ENCODE measurements at regions of chr20 and their contacts with region 1.

Region 1: DNA sequence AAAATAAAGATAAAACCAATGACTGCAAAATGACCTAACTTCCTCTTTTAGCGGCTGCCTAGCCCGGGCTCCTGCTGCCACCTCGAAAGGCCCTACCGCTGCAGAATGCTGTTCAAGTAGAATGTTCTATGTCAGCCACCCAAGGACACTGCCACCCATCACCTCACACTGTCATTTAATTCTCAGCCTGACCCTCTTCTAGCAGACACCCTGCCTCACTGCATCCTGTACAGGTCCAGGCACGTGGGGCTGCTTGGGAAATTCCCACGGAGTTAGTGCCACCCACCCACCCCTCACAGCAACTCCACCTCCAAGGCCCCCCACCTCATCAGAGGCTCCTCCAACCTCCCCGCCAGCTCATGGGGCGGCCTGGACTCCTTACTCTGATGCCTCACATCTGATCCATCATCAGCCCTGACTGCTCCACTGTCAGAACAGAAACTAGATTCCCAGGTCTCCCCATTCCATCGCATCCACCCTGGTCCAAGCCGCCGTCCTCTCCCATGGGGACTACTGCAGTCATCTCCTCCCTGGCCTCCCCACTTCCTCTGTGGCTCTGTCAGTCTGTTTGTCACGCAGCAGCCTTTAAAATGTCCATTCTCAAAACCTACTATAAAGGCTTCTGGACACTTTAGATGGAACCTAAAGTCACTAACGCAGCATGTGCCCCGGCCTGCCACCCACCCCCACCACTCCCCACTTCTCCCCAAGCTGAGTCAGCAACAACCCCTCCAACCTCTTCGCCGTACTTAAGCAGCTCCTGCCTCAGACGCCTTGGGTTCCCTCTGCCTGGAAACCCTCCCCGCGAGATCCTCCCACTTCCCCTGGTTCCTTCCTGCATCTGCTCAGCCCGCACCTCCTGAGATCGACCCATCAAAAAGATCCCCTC is 17.0 kb downstream of the NFATC2 start:
- DNase-seq: no peak
- H3K4me3 Mint-ChIP-seq: peak overlapping the region; percentile 72
- H3K27ac Mint-ChIP-seq: peak overlapping the region; percentile 96
- H3K4me1 Mint-ChIP-seq: peaks cover 80% of the 10 kb centered on the region
- H3K27me3 Mint-ChIP-seq: no peaks in the 10 kb centered on the region

Region 2: GRCh38 chr20:51512645-51513044 is 12.8 kb before region 1 on chr20:
- intact Hi-C with region 1: loop called (anchors 1 kb)
- DNase-seq: no peak
- H3K4me3 Mint-ChIP-seq: peak overlapping the region; percentile 1
- H3K27ac Mint-ChIP-seq: peak overlapping the region; percentile 70
- H3K4me1 Mint-ChIP-seq: peaks cover 70% of the 10 kb centered on the region
- H3K27me3 Mint-ChIP-seq: no peaks in the 10 kb centered on the region

Region 3: GRCh38 chr20:51631011-51631950 is 105.8 kb after region 1 on chr20:
- intact Hi-C with region 1: no loop called
- DNase-seq: peak; percentile 7
- H3K4me3 Mint-ChIP-seq: peak overlapping the region; percentile 5
- H3K27ac Mint-ChIP-seq: peak overlapping the region; percentile 70
- H3K4me1 Mint-ChIP-seq: peaks cover 43% of the 10 kb centered on the region
- H3K27me3 Mint-ChIP-seq: peaks cover 7% of the 10 kb centered on the region

Measured in activated T-helper 1 cell treated with anti-CD3 and anti-CD28 coated beads, Interleukin-12 subunit alpha, Interleukin-12 subunit beta, Interleukin-2, Interleukin-4 antibody, amounts not matched to agents 30 ng/mL and 10 ng/mL and 1 ng/mL, durations not matched to agents 14 hours and 24 hours and 36 hours (primary cell).